Activated CD8-positive, alpha-beta T cell treated with anti-CD3 and anti-CD28 coated beads, Interleukin-2, amount 10 ng/mL, durations not matched to agents 7 days and 5 days (primary cell): ENCODE measurements at regions of chr11 and their contacts with region 1.

Region 1: DNA sequence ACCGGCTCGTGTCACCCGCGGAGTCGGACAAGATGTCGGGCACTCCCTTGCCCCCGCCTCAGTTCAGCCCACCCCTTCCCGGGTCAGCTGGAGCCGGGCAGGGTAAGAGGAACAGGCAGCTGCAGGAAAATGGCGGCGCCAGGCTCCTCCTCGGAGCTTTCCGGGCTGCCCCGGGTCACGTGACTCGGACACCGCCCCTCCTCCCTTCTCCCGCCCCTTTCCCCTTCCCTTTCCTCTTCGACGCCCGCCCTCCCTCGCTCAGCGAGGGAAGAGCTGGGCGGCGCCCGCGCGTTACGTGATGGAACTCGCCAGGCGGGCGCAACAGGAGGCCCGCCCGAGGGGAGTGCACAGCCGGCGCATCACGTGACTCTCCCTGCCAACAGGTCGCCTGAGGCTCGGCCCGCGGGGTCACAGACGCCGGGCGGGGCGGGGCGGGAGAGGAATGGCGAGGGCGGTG is at the start of gene PICALM:
- DNase-seq: peak; percentile 98
- ATAC-seq: peak; percentile 92
- H3K4me3 Mint-ChIP-seq: peak within 1 kb of the TSS; percentile 98
- H3K27ac Mint-ChIP-seq: peak within 1 kb of the TSS; percentile 95
- H3K4me1 Mint-ChIP-seq: peaks cover 37% of the 10 kb centered on the region
- H3K27me3 Mint-ChIP-seq: no peaks in the 10 kb centered on the region
- total RNA-seq, gene PICALM: 110 to 115 TPM

Region 2: GRCh38 chr11:86041975-86042378 is 27.0 kb before region 1 on chr11:
- CTCF ChIA-PET with region 1: interaction called, 65 read pairs
- POLR2A ChIA-PET with region 1: no interaction called
- DNase-seq: peak; percentile 68
- ATAC-seq: peak; percentile 84
- H3K4me3 Mint-ChIP-seq: no peak overlapping the region
- H3K27ac Mint-ChIP-seq: no peak overlapping the region
- H3K4me1 Mint-ChIP-seq: peaks cover 52% of the 10 kb centered on the region
- H3K27me3 Mint-ChIP-seq: no peaks in the 10 kb centered on the region

Region 3: GRCh38 chr11:86047275-86047991 is 21.5 kb before region 1 on chr11:
- CTCF ChIA-PET with region 1: interaction called, 65 read pairs
- POLR2A ChIA-PET with region 1: interaction called, 5 read pairs
- DNase-seq: no peak
- ATAC-seq: peak; percentile 30
- H3K4me3 Mint-ChIP-seq: no peak overlapping the region
- H3K27ac Mint-ChIP-seq: peak overlapping the region; percentile 78
- H3K4me1 Mint-ChIP-seq: peaks cover 77% of the 10 kb centered on the region
- H3K27me3 Mint-ChIP-seq: no peaks in the 10 kb centered on the region

Region 4: GRCh38 chr11:86116386-86116726 is 47.4 kb after region 1 on chr11:
- CTCF ChIA-PET with region 1: interaction called, 19 read pairs
- POLR2A ChIA-PET with region 1: interaction called, 5 read pairs
- DNase-seq: no peak
- ATAC-seq: peak; percentile 76
- H3K4me3 Mint-ChIP-seq: no peak overlapping the region
- H3K27ac Mint-ChIP-seq: no peak overlapping the region
- H3K4me1 Mint-ChIP-seq: peaks cover 19% of the 10 kb centered on the region
- H3K27me3 Mint-ChIP-seq: peaks cover 2% of the 10 kb centered on the region

Region 5: DNA sequence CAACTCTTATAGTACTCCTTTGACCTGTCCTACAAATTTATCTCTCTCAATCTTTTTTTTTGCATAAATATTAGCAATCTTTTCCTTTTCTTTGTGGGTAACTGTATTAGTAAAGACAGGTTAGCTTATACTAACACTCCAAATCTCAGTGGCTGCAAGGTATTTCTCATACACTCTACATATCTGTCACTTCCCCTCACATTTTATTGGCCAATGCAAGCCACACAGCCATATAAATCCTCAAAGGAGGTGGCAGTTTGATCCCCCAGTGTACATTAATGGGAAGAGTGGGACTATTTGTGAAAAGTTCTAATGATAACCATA is 133.0 kb after region 1 on chr11:
- CTCF ChIA-PET with region 1: interaction called, 82 read pairs
- POLR2A ChIA-PET with region 1: interaction called, 4 read pairs
- DNase-seq: no peak
- ATAC-seq: peak; percentile 70
- H3K4me3 Mint-ChIP-seq: no peak overlapping the region
- H3K27ac Mint-ChIP-seq: no peak overlapping the region
- H3K4me1 Mint-ChIP-seq: no peaks in the 10 kb centered on the region
- H3K27me3 Mint-ChIP-seq: peaks cover under 1% of the 10 kb centered on the region

Region 6: GRCh38 chr11:86244522-86245368 is 175.8 kb after region 1 on chr11 and contains the start of gene EED:
- CTCF ChIA-PET with region 1: interaction called, 5 read pairs
- POLR2A ChIA-PET with region 1: interaction called, 15 read pairs
- DNase-seq: peak; percentile 95
- ATAC-seq: peak; percentile 84
- H3K4me3 Mint-ChIP-seq: no peak within 1 kb of the TSS
- H3K27ac Mint-ChIP-seq: no peak within 1 kb of the TSS
- H3K4me1 Mint-ChIP-seq: peaks cover 38% of the 10 kb centered on the region
- H3K27me3 Mint-ChIP-seq: no peaks in the 10 kb centered on the region
- total RNA-seq, gene EED: 44.8 to 48.3 TPM